Activated T-helper 2 cell treated with anti-CD3 and anti-CD28 coated beads, Interferon-gamma antibody, Interleukin-2, Interleukin-4, amounts not matched to agents 10 μg/mL and 5 μg/mL and 100 μg/mL, durations not matched to agents 14 hours and 24 hours and 36 hours (primary cell): ENCODE measurements at regions of chrX and their contacts with region 1.

Region 1: GRCh38 chrX:103941201-103941975 is 21.0 kb upstream of the TMSB15B start:
- DNase-seq: no peak
- H3K4me3 Mint-ChIP-seq: no peak overlapping the region
- H3K27ac Mint-ChIP-seq: no peak overlapping the region
- H3K4me1 Mint-ChIP-seq: peaks cover 34% of the 10 kb centered on the region
- H3K27me3 Mint-ChIP-seq: no peaks in the 10 kb centered on the region

Region 2: GRCh38 chrX:103845165-103845653 is 96.2 kb before region 1 on chrX:
- intact Hi-C with region 1: loop called (anchors 1 kb)
- DNase-seq: no peak
- H3K4me3 Mint-ChIP-seq: no peak overlapping the region
- H3K27ac Mint-ChIP-seq: no peak overlapping the region
- H3K4me1 Mint-ChIP-seq: peaks cover 3% of the 10 kb centered on the region
- H3K27me3 Mint-ChIP-seq: peaks cover 2% of the 10 kb centered on the region

Region 3: GRCh38 chrX:103904301-103904700 is 37.1 kb before region 1 on chrX:
- intact Hi-C with region 1: no loop called
- DNase-seq: no peak
- H3K4me3 Mint-ChIP-seq: no peak overlapping the region
- H3K27ac Mint-ChIP-seq: no peak overlapping the region
- H3K4me1 Mint-ChIP-seq: no peaks in the 10 kb centered on the region
- H3K27me3 Mint-ChIP-seq: no peaks in the 10 kb centered on the region

Region 4: GRCh38 chrX:103918581-103919269 is 22.7 kb before region 1 on chrX:
- intact Hi-C with region 1: loop called (anchors 2 kb)
- DNase-seq: peak; percentile 55
- H3K4me3 Mint-ChIP-seq: peak overlapping the region; percentile 94
- H3K27ac Mint-ChIP-seq: peak overlapping the region; percentile 92
- H3K4me1 Mint-ChIP-seq: peaks cover 14% of the 10 kb centered on the region
- H3K27me3 Mint-ChIP-seq: no peaks in the 10 kb centered on the region